PC-3 (cell line): ENCODE measurements at regions of chr3 and their contacts with region 1.

Region 1: DNA sequence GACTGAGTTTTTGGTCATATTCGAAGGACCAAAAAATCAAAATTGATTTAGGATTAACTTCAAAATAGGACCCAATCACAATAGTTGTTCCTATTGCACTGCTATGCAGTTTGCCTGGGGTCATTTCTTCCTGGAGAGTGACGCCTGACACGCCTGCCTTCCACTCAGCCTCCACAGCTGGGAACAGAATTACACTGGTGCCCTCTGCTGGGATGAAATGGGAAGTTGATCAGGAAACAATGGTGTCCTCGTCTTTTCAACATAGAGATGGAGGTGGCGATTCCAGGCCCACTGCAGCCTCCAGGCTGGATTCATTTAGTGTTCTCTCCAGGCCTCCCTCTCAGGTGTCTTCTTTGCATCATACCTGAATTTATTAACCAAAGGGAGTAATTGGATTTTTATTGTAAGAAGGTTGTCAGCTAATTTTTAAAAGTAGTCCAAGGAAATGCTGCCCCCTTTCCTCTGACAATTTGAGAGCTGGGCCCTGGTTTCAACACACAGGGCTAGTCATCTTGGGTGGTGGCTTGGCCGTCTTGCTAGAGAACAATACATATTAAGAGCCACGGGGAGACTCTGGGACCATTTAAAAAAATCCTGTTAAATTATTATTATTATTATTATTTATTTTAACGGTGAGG is 69.7 kb downstream of the GAP43 start:
- DNase-seq: peak; percentile 90
- ATAC-seq: peak; percentile 96
- H3K4me3 ChIP-seq: no peak overlapping the region
- H3K27ac ChIP-seq: no peak overlapping the region
- H3K4me1 ChIP-seq: no peaks in the 10 kb centered on the region
- H3K27me3 ChIP-seq: no peaks in the 10 kb centered on the region
- CTCF ChIP-seq: peak; percentile 94

Region 2: DNA sequence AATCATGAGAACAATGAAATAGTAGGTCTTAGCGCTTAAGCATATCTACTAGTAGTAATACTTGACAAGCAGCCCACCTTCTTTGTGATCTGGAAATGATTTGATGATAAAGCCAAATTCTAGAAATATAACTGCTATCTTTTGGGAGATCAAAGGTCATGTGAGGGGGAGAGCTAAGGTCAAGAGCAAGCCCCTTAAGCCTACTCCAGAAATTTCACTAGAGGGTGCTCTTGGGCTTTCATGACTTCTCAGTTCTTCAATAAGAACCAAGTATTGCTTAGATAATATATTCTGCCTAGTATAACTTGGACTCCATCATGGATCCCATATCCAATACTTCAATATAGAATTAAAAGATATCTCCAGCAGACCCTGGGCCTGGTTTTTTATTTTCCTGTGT is 865.5 kb before region 1 on chr3:
- CTCF ChIA-PET with region 1: no interaction called
- POLR2A ChIA-PET with region 1: no interaction called
- intact Hi-C with region 1: loop called (anchors 5 kb)
- DNase-seq: peak; percentile 51
- ATAC-seq: peak; percentile 86
- H3K4me3 ChIP-seq: no peak overlapping the region
- H3K27ac ChIP-seq: no peak overlapping the region
- H3K4me1 ChIP-seq: no peaks in the 10 kb centered on the region
- H3K27me3 ChIP-seq: no peaks in the 10 kb centered on the region
- CTCF ChIP-seq: peak; percentile 68

Region 3: GRCh38 chr3:115040673-115041286 is 652.2 kb before region 1 on chr3:
- CTCF ChIA-PET with region 1: no interaction called
- POLR2A ChIA-PET with region 1: no interaction called
- intact Hi-C with region 1: loop called (anchors 1 kb)
- DNase-seq: peak; percentile 63
- ATAC-seq: peak; percentile 78
- H3K4me3 ChIP-seq: no peak overlapping the region
- H3K27ac ChIP-seq: no peak overlapping the region
- H3K4me1 ChIP-seq: no peaks in the 10 kb centered on the region
- H3K27me3 ChIP-seq: no peaks in the 10 kb centered on the region
- CTCF ChIP-seq: peak; percentile 86

Region 4: DNA sequence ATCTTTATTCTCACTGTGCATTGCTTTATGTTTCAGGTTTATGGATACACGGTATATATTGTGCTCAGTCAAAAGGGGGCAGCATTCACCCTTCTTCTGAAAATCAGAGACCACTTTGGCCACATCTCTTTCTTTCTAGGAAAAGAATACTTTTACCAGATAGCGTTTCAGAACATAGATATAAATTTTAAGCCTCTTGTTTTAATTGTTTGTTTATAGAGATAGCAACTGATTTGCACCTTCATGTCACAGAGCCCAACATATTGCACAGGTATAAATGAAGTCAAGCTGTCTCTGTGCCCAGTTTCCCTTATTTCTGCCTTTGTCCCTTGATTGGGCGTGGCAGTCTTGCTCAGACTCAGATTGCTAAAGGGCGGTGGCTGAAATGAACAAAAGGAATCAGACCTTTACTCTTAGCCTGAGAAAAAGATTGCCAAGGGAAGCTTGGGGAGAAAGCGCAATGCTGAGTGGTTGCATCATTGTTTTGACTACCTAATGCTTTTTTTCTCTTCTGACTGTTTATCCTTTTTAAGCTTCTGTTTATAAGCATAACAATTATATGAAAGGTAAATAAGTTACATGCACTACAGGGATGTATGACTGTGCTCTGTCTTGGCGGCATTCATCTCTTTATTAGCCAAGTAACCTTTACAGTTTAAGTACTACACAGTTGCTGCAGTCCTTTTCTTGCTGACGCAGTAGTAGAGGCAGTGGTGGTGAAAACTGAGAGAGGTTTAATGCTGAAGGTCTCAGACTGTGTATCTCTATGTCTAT is 475.1 kb before region 1 on chr3:
- CTCF ChIA-PET with region 1: interaction called, 7 read pairs
- POLR2A ChIA-PET with region 1: no interaction called
- intact Hi-C with region 1: loop called (anchors 1 kb)
- DNase-seq: peak; percentile 72
- ATAC-seq: peak; percentile 86
- H3K4me3 ChIP-seq: no peak overlapping the region; the same call in 1 of the 2 replicates
- H3K27ac ChIP-seq: peak overlapping the region; percentile 17
- H3K4me1 ChIP-seq: peaks cover 10% of the 10 kb centered on the region; the same call in 1 of the 2 replicates
- H3K27me3 ChIP-seq: no peaks in the 10 kb centered on the region
- CTCF ChIP-seq: peak; percentile 95

Region 5: GRCh38 chr3:115436767-115437301 is 256.2 kb before region 1 on chr3:
- CTCF ChIA-PET with region 1: no interaction called
- POLR2A ChIA-PET with region 1: no interaction called
- intact Hi-C with region 1: loop called (anchors 2 kb)
- DNase-seq: peak; percentile 80
- ATAC-seq: peak; percentile 80
- H3K4me3 ChIP-seq: no peak overlapping the region
- H3K27ac ChIP-seq: peak overlapping the region; percentile 39; the same call in 1 of the 2 replicates
- H3K4me1 ChIP-seq: peaks cover 5% of the 10 kb centered on the region
- H3K27me3 ChIP-seq: no peaks in the 10 kb centered on the region
- CTCF ChIP-seq: peak; percentile 55

Region 6: GRCh38 chr3:115814778-115815380 is 121.9 kb after region 1 on chr3:
- CTCF ChIA-PET with region 1: interaction called, 5 read pairs
- POLR2A ChIA-PET with region 1: no interaction called
- intact Hi-C with region 1: loop called (anchors 1 kb)
- DNase-seq: peak; percentile 94
- ATAC-seq: peak; percentile 89
- H3K4me3 ChIP-seq: no peak overlapping the region
- H3K27ac ChIP-seq: no peak overlapping the region
- H3K4me1 ChIP-seq: peaks cover 8% of the 10 kb centered on the region; the same call in 1 of the 2 replicates
- H3K27me3 ChIP-seq: no peaks in the 10 kb centered on the region
- CTCF ChIP-seq: peak; percentile 97

Region 7: GRCh38 chr3:116000311-116000710 is 307.3 kb after region 1 on chr3:
- CTCF ChIA-PET with region 1: no interaction called
- POLR2A ChIA-PET with region 1: no interaction called
- intact Hi-C with region 1: no loop called
- DNase-seq: peak; percentile 93
- ATAC-seq: peak; percentile 77
- H3K4me3 ChIP-seq: peak overlapping the region; percentile 20; the same call in 1 of the 2 replicates
- H3K27ac ChIP-seq: peak overlapping the region; percentile 89
- H3K4me1 ChIP-seq: peaks cover 38% of the 10 kb centered on the region
- H3K27me3 ChIP-seq: no peaks in the 10 kb centered on the region
- CTCF ChIP-seq: no peak